ENCODE measurements at regions of chr3 and their contacts with region 1.

Region 1: GRCh38 chr3:134212906-134213665 is 37.6 kb downstream of the RYK start:
- DNase-seq: peak; percentile 81
- H3K4me3 ChIP-seq: no peak overlapping the region
- H3K27ac ChIP-seq: no peak overlapping the region
- H3K4me1 ChIP-seq: peaks cover 3% of the 10 kb centered on the region
- H3K27me3 ChIP-seq: no peaks in the 10 kb centered on the region
- CTCF ChIP-seq: peak; percentile 91
- POLR2A ChIP-seq: no peak

Region 2: DNA sequence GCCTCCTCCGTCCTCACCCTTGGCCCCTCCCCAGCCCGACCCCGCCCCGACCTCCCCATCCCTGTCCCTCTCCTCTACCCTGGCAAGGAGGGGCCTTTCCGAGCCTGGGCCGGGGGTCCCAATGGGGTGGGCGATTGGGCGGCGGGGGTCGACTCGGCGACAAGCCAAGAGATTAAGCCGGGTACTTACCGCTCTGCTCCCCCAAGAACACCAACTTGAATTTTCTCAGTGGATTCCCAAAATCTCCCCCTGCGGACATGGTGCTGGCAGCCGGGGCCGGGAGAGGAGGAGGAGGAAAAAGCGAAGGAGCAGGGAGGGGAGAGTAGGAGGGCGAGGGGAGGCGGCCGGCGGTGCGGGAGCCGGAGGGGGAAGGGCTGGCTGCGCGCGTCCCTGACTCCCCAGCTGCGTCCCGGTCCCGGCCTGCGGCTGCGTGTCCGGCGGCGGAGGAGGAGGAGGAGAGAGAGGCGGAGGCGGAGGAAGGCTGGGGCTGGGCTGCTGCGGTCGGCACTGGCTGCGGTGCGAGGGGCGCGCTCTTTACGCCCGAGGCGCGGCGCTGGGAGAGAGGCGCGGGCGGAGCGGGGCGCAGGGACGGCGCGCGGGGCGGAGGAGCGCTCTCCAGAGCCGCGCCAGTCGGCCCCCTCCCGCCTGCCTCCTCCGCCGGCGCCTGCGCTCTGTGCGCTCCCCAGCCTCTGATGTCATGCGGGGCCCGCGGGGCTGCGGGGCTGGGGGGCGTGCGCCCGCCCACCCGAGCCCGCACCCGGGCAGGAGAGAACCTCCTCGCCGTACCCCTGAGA is 317.7 kb before region 1 on chr3 and contains the start of gene RAB6B:
- CTCF ChIA-PET with region 1: interaction called, 14 read pairs
- POLR2A ChIA-PET with region 1: no interaction called
- dilution Hi-C with region 1: no loop called
- intact Hi-C with region 1: no loop called
- DNase-seq: peak; percentile 46
- H3K4me3 ChIP-seq: peak within 1 kb of the TSS; percentile 39 to 76 (median 67)
- H3K27ac ChIP-seq: no peak within 1 kb of the TSS
- H3K4me1 ChIP-seq: peaks cover 6% of the 10 kb centered on the region
- H3K27me3 ChIP-seq: peaks cover 16 to 18% of the 10 kb centered on the region in 2 experiments
- CTCF ChIP-seq: no peak
- POLR2A ChIP-seq: no peak
- total RNA-seq, gene RAB6B: 5.0 and 6.7 TPM in 2 replicates

Region 3: DNA sequence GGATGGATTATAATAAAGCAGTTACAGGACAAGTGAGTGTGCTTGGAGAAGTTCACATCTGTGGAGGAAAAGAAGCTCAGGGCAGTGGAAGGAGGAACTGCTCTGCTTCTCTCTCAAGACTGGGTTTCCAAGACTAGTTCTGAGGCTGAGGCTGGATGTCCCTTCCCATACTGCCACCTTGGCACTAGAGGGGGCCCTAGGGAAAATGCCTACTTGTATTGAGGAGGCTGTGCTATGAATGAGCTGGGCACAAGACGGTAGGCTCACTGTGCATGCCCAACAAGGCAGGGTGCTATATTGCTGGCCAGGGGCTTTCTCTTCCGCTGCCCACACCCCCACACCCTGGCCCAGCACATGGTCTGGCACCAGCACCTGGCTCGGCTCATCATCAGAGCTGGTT is 248.5 kb before region 1 on chr3:
- CTCF ChIA-PET with region 1: interaction called, 27 read pairs
- POLR2A ChIA-PET with region 1: no interaction called
- dilution Hi-C with region 1: no loop called
- intact Hi-C with region 1: no loop called
- DNase-seq: no peak
- H3K4me3 ChIP-seq: no peak overlapping the region
- H3K27ac ChIP-seq: no peak overlapping the region
- H3K4me1 ChIP-seq: peaks cover 15% of the 10 kb centered on the region
- H3K27me3 ChIP-seq: no peaks in the 10 kb centered on the region
- CTCF ChIP-seq: peak; percentile 27 to 31
- POLR2A ChIP-seq: no peak

Region 4: GRCh38 chr3:134228035-134228434 is 14.9 kb after region 1 on chr3:
- CTCF ChIA-PET with region 1: interaction called, 112 read pairs
- POLR2A ChIA-PET with region 1: no interaction called
- dilution Hi-C with region 1: no loop called
- intact Hi-C with region 1: loop called (anchors 1 kb)
- DNase-seq: no peak
- H3K4me3 ChIP-seq: no peak overlapping the region
- H3K27ac ChIP-seq: no peak overlapping the region
- H3K4me1 ChIP-seq: peaks cover 3% of the 10 kb centered on the region
- H3K27me3 ChIP-seq: no peaks in the 10 kb centered on the region
- CTCF ChIP-seq: no peak
- POLR2A ChIP-seq: no peak

Region 5: GRCh38 chr3:134299185-134299887 is 86.2 kb after region 1 on chr3:
- CTCF ChIA-PET with region 1: interaction called, 64 read pairs
- POLR2A ChIA-PET with region 1: no interaction called
- dilution Hi-C with region 1: no loop called
- intact Hi-C with region 1: loop called (anchors 1 kb)
- DNase-seq: peak; percentile 22
- H3K4me3 ChIP-seq: no peak overlapping the region
- H3K27ac ChIP-seq: no peak overlapping the region
- H3K4me1 ChIP-seq: no peaks in the 10 kb centered on the region
- H3K27me3 ChIP-seq: peaks cover 0 to 3% of the 10 kb centered on the region in 2 experiments
- CTCF ChIP-seq: no peak
- POLR2A ChIP-seq: no peak

Region 6: GRCh38 chr3:134336587-134336986 is 123.5 kb after region 1 on chr3:
- CTCF ChIA-PET with region 1: no interaction called
- POLR2A ChIA-PET with region 1: no interaction called
- dilution Hi-C with region 1: no loop called
- intact Hi-C with region 1: no loop called
- DNase-seq: no peak
- H3K4me3 ChIP-seq: no peak overlapping the region
- H3K27ac ChIP-seq: no peak overlapping the region
- H3K4me1 ChIP-seq: peaks cover 6% of the 10 kb centered on the region
- H3K27me3 ChIP-seq: no peaks in the 10 kb centered on the region
- CTCF ChIP-seq: no peak
- POLR2A ChIP-seq: no peak

Region 7: GRCh38 chr3:134485718-134486576 is 272.9 kb after region 1 on chr3 and contains the starts of genes ANAPC13 and CEP63:
- CTCF ChIA-PET with region 1: interaction called, 16 read pairs
- POLR2A ChIA-PET with region 1: no interaction called
- dilution Hi-C with region 1: no loop called
- intact Hi-C with region 1: no loop called
- DNase-seq: peak; percentile 99
- H3K4me3 ChIP-seq: peak within 1 kb of the TSS; percentile 75 to 88 (median 75)
- H3K27ac ChIP-seq: peak within 1 kb of the TSS; percentile 92
- H3K4me1 ChIP-seq: peaks cover 45% of the 10 kb centered on the region
- H3K27me3 ChIP-seq: no peaks in the 10 kb centered on the region
- CTCF ChIP-seq: no peak
- POLR2A ChIP-seq: peak; percentile 82
- total RNA-seq, gene ANAPC13: 50.8 and 58.6 TPM in 2 replicates
- total RNA-seq, gene CEP63: 24.9 and 29.4 TPM in 2 replicates